ENCODE measurements at regions of chr1 and their contacts with region 1.

Region 1: GRCh38 chr1:75991497-75992114 is 59.4 kb upstream of the ASB17 start:
- DNase-seq: peak; percentile 24 to 69 (median 60)
- ATAC-seq: peak; percentile 68
- H3K4me3 ChIP-seq: no peak overlapping the region
- H3K4me3 Mint-ChIP-seq: no peak overlapping the region
- H3K27ac ChIP-seq: no peak overlapping the region
- H3K27ac Mint-ChIP-seq: no peak overlapping the region
- H3K4me1 ChIP-seq: no peaks in the 10 kb centered on the region
- H3K4me1 Mint-ChIP-seq: no peaks in the 10 kb centered on the region
- H3K27me3 ChIP-seq: peaks cover 4% of the 10 kb centered on the region in 2 donors
- H3K27me3 Mint-ChIP-seq: peaks cover 0 to 8% (median 3%) of the 10 kb centered on the region in 5 donors

Region 2: GRCh38 chr1:75198761-75199160 is 792.8 kb before region 1 on chr1:
- CTCF ChIA-PET with region 1: no interaction called
- POLR2A ChIA-PET with region 1: no interaction called
- intact Hi-C with region 1: no loop called
- DNase-seq: no peak
- ATAC-seq: no peak
- H3K4me3 ChIP-seq: no peak overlapping the region
- H3K4me3 Mint-ChIP-seq: no peak overlapping the region
- H3K27ac ChIP-seq: no peak overlapping the region
- H3K27ac Mint-ChIP-seq: no peak overlapping the region
- H3K4me1 ChIP-seq: no peaks in the 10 kb centered on the region
- H3K4me1 Mint-ChIP-seq: no peaks in the 10 kb centered on the region
- H3K27me3 ChIP-seq: no peaks in the 10 kb centered on the region
- H3K27me3 Mint-ChIP-seq: peaks cover 1 to 7% (median 6%) of the 10 kb centered on the region in 5 donors

Region 3: GRCh38 chr1:75559136-75559535 is 432.5 kb before region 1 on chr1:
- CTCF ChIA-PET with region 1: no interaction called
- POLR2A ChIA-PET with region 1: no interaction called
- intact Hi-C with region 1: no loop called
- DNase-seq: no peak
- ATAC-seq: no peak
- H3K4me3 ChIP-seq: no peak overlapping the region
- H3K4me3 Mint-ChIP-seq: no peak overlapping the region
- H3K27ac ChIP-seq: no peak overlapping the region
- H3K27ac Mint-ChIP-seq: no peak overlapping the region
- H3K4me1 ChIP-seq: no peaks in the 10 kb centered on the region
- H3K4me1 Mint-ChIP-seq: no peaks in the 10 kb centered on the region
- H3K27me3 ChIP-seq: no peaks in the 10 kb centered on the region
- H3K27me3 Mint-ChIP-seq: peaks cover 0 to 6% (median 4%) of the 10 kb centered on the region in 5 donors

Region 4: GRCh38 chr1:75950176-75950575 is 41.4 kb before region 1 on chr1:
- CTCF ChIA-PET with region 1: no interaction called
- POLR2A ChIA-PET with region 1: no interaction called
- intact Hi-C with region 1: no loop called
- DNase-seq: no peak
- ATAC-seq: no peak
- H3K4me3 ChIP-seq: no peak overlapping the region
- H3K4me3 Mint-ChIP-seq: no peak overlapping the region
- H3K27ac ChIP-seq: no peak overlapping the region
- H3K27ac Mint-ChIP-seq: no peak overlapping the region
- H3K4me1 ChIP-seq: no peaks in the 10 kb centered on the region
- H3K4me1 Mint-ChIP-seq: no peaks in the 10 kb centered on the region
- H3K27me3 ChIP-seq: no peaks in the 10 kb centered on the region
- H3K27me3 Mint-ChIP-seq: peaks cover 0 to 12% (median 2%) of the 10 kb centered on the region in 5 donors

Region 5: DNA sequence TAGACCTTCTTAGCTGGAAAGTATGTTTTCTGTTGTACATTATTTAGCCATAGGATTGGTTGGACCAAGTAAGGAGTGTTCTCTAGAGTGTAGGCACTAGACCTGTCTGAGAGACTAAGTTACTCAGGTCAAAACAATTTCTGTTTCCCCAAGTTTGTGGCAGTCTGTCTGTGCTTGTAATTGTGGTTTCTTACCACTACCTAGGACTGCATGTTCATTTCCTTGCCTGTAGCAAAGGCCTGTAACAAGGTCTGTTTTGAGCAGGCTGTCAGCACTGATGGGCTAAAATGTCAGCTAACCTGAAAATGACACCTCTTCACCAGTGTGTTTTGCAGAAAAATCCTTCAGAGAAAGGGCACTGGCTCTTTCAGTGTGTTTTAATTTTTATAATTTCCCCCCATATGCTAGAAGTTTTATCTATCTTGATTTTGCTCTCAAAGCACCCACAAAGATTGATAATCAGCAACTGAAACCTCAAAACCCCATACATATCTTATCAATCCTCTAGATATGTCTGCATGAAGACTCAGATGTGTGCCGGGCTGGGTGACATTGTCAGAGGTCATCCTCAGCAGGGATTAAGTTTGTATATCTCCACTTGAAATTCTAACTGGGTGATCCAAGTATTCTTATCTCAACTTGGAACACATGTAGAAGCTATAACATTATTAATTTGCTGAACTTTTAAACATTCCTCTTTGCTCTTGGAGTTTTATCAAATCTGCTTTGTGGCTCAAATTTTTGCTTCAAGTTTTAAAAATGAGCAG is 32.2 kb after region 1 on chr1:
- CTCF ChIA-PET with region 1: interaction called, 3 read pairs
- POLR2A ChIA-PET with region 1: no interaction called
- intact Hi-C with region 1: loop called in 1 of 2 experiments (anchors 1 kb)
- DNase-seq: peak in 5 of 9 donors; percentile 4 to 32 (median 18)
- ATAC-seq: peak; percentile 54
- H3K4me3 ChIP-seq: no peak overlapping the region
- H3K4me3 Mint-ChIP-seq: peak overlapping the region in 5 of 10 donors; percentile 8 to 59 (median 32)
- H3K27ac ChIP-seq: no peak overlapping the region
- H3K27ac Mint-ChIP-seq: peak overlapping the region in 8 of 9 donors; percentile 7 to 92 (median 77)
- H3K4me1 ChIP-seq: peaks cover 0 to 6% of the 10 kb centered on the region in 2 donors
- H3K4me1 Mint-ChIP-seq: peaks cover 3 to 36% (median 14%) of the 10 kb centered on the region in 7 donors
- H3K27me3 ChIP-seq: no peaks in the 10 kb centered on the region
- H3K27me3 Mint-ChIP-seq: peaks cover 0 to 17% (median 7%) of the 10 kb centered on the region in 5 donors

Region 6: DNA sequence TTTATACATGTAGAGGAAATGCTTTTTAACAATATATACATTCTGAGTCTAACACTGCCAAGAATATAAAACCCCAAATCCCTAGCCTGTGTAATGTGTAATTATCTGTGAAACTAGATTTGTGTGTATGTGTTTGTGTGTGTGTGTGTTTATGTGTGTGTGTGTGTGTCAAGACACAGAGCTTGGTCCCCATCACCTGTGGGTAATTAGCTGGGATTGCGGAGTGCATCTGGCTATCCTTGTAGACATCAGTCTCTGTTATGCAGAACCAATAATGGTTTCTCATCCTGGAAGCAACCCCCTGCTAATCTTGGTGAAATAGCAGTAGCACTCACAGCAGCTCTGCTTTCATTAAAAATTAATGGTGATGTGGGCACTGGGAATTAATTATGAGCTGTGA is 56.6 kb after region 1 on chr1:
- CTCF ChIA-PET with region 1: no interaction called
- POLR2A ChIA-PET with region 1: no interaction called
- intact Hi-C with region 1: no loop called
- DNase-seq: no peak
- ATAC-seq: no peak
- H3K4me3 ChIP-seq: no peak overlapping the region
- H3K4me3 Mint-ChIP-seq: no peak overlapping the region
- H3K27ac ChIP-seq: no peak overlapping the region
- H3K27ac Mint-ChIP-seq: no peak overlapping the region
- H3K4me1 ChIP-seq: no peaks in the 10 kb centered on the region
- H3K4me1 Mint-ChIP-seq: peaks cover 0 to 7% (median 0%) of the 10 kb centered on the region in 7 donors
- H3K27me3 ChIP-seq: no peaks in the 10 kb centered on the region
- H3K27me3 Mint-ChIP-seq: peaks cover under 1 to 12% (median 7%) of the 10 kb centered on the region in 5 donors

Region 7: DNA sequence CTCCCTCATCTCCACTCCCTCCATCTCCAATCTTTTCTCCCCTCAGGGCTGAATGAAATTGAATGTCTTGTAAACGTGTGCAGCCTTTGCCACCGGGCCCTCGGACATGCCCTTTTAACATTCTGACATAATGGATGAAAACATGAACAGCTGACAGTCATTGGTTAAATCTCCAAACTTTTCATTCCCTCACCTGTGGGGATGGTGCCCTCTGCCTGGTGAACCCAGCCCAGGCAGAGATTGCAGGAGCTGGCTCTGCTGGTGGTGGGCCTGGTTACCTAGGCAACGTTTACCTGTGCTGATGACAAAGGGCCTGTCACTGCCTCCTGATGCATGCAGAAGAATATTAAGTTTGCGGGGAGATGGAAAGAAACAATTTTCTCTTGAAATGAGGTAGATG is 104.2 kb after region 1 on chr1:
- CTCF ChIA-PET with region 1: no interaction called
- POLR2A ChIA-PET with region 1: no interaction called
- intact Hi-C with region 1: loop called in 1 of 2 experiments (anchors 5 kb)
- DNase-seq: no peak
- ATAC-seq: no peak
- H3K4me3 ChIP-seq: no peak overlapping the region
- H3K4me3 Mint-ChIP-seq: no peak overlapping the region
- H3K27ac ChIP-seq: no peak overlapping the region
- H3K27ac Mint-ChIP-seq: no peak overlapping the region
- H3K4me1 ChIP-seq: no peaks in the 10 kb centered on the region
- H3K4me1 Mint-ChIP-seq: no peaks in the 10 kb centered on the region
- H3K27me3 ChIP-seq: no peaks in the 10 kb centered on the region
- H3K27me3 Mint-ChIP-seq: peaks cover 0 to 3% (median 0%) of the 10 kb centered on the region in 5 donors

Region 8: GRCh38 chr1:76330991-76331603 is 339.5 kb after region 1 on chr1:
- CTCF ChIA-PET with region 1: no interaction called
- POLR2A ChIA-PET with region 1: no interaction called
- intact Hi-C with region 1: loop called in 1 of 2 experiments (anchors 10 kb)
- DNase-seq: peak in 7 of 9 donors; percentile 19 to 56 (median 51)
- ATAC-seq: peak; percentile 63
- H3K4me3 ChIP-seq: no peak overlapping the region
- H3K4me3 Mint-ChIP-seq: no peak overlapping the region
- H3K27ac ChIP-seq: no peak overlapping the region
- H3K27ac Mint-ChIP-seq: peak overlapping the region in 1 of 9 donors; percentile 16
- H3K4me1 ChIP-seq: no peaks in the 10 kb centered on the region
- H3K4me1 Mint-ChIP-seq: peaks cover 0 to 41% (median 14%) of the 10 kb centered on the region in 7 donors
- H3K27me3 ChIP-seq: no peaks in the 10 kb centered on the region
- H3K27me3 Mint-ChIP-seq: no peaks in the 10 kb centered on the region

Region 9: GRCh38 chr1:77126307-77126706 is 1134.7 kb after region 1 on chr1:
- CTCF ChIA-PET with region 1: no interaction called
- POLR2A ChIA-PET with region 1: no interaction called
- intact Hi-C with region 1: loop called (anchors 1 to 5 kb)
- DNase-seq: peak in 6 of 9 donors; percentile 17 to 50 (median 38)
- ATAC-seq: peak; percentile 61
- H3K4me3 ChIP-seq: no peak overlapping the region
- H3K4me3 Mint-ChIP-seq: no peak overlapping the region
- H3K27ac ChIP-seq: no peak overlapping the region
- H3K27ac Mint-ChIP-seq: peak overlapping the region in 2 of 9 donors; percentile 22 to 41
- H3K4me1 ChIP-seq: no peaks in the 10 kb centered on the region
- H3K4me1 Mint-ChIP-seq: peaks cover 0 to 6% (median 0%) of the 10 kb centered on the region in 7 donors
- H3K27me3 ChIP-seq: no peaks in the 10 kb centered on the region
- H3K27me3 Mint-ChIP-seq: no peaks in the 10 kb centered on the region

Region 10: DNA sequence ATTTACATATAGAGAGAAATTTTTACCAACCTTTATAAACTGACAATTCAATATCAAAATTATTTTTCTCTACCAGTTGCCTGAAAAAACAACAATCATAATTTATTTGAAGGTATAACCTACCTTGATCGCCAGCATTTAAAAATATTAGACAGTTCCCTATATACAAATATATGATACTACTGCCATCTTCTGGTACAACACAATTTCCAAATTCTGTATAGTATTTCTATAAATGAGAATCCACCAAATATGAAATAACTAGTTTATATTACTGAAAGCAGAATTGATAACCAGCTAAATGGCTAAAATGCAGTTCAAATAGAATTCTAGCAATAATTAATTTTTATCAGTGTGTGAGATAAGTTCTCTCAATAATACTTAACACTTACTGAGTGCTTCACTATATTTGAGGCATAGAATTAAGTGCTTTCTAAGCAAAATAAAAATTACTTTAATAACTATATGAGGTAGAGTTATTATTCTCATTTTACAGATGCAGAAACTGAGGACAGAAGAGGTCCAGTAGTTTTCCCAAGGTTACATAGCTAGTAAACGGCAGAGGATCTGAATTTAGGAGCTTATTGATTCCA is 1152.0 kb after region 1 on chr1:
- CTCF ChIA-PET with region 1: no interaction called
- POLR2A ChIA-PET with region 1: no interaction called
- intact Hi-C with region 1: loop called in 1 of 2 experiments (anchors 1 kb)
- DNase-seq: peak in 4 of 9 donors; percentile 9 to 31 (median 18)
- ATAC-seq: no peak
- H3K4me3 ChIP-seq: no peak overlapping the region
- H3K4me3 Mint-ChIP-seq: no peak overlapping the region
- H3K27ac ChIP-seq: no peak overlapping the region
- H3K27ac Mint-ChIP-seq: no peak overlapping the region
- H3K4me1 ChIP-seq: peaks cover 0 to 3% of the 10 kb centered on the region in 2 donors
- H3K4me1 Mint-ChIP-seq: peaks cover 0 to 8% (median 6%) of the 10 kb centered on the region in 7 donors
- H3K27me3 ChIP-seq: no peaks in the 10 kb centered on the region
- H3K27me3 Mint-ChIP-seq: no peaks in the 10 kb centered on the region

Region 11: DNA sequence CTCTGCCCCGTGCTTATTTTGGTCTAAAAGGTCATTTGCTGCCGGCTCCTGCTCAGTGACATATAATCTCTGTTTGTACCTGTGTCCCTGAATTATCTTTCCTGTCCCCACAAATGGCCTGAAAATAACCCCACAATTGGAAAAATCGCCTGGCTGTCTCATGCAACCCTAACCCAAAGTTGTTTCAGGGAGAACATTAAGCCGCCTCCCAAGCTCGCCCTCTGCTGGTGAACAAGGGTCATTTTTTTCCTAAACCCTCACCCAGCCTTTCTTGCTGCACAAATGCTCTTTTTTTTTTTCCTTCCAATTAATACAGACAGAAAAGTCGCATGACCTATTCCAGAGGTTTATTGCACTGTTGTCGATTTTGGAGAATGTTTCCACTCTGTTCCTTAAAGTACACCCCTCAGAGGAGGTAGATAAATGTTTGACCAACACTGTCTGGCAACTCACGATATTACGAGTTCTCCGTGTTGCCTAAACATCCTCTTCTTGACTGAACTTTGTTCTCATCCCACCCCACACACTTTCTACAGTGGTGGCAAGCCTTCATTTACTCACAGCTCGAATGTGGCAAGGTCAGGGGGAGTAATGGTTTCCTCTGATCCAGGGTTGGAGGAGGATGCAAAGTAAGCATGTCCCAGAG is 1542.2 kb after region 1 on chr1:
- CTCF ChIA-PET with region 1: no interaction called
- POLR2A ChIA-PET with region 1: no interaction called
- intact Hi-C with region 1: loop called (anchors 5 to 10 kb)
- DNase-seq: peak; percentile 34 to 75 (median 60)
- ATAC-seq: peak; percentile 71
- H3K4me3 ChIP-seq: no peak overlapping the region
- H3K4me3 Mint-ChIP-seq: peak overlapping the region in 6 of 10 donors; percentile 22 to 69 (median 50)
- H3K27ac ChIP-seq: no peak overlapping the region
- H3K27ac Mint-ChIP-seq: peak overlapping the region in 8 of 9 donors; percentile 16 to 94 (median 38)
- H3K4me1 ChIP-seq: peaks cover 0 to 4% of the 10 kb centered on the region in 2 donors
- H3K4me1 Mint-ChIP-seq: peaks cover 2 to 16% (median 10%) of the 10 kb centered on the region in 7 donors
- H3K27me3 ChIP-seq: no peaks in the 10 kb centered on the region
- H3K27me3 Mint-ChIP-seq: no peaks in the 10 kb centered on the region